Activated B cell treated with CpG ODN at 0.5 μM for 24 hours (primary cell): ENCODE measurements at regions of chr14 and their contacts with region 1.

Region 1: DNA sequence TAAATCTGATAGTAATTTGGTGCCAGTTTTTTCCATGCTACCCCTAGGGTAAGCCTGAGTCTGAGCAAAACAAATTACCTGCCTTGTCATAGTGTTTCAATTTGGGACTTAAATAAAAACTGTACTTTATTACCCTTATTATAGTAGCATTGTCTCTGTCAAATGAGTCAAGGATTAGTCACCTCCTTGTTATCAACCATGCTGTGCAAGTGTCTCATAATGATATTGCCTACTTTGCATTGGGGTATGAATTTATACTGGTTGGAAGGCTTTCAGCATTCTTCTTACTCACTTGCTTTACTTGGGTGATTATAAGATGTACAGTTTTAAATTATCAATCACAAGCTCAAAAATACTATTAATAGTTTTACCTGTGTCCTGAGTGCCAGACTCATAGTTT is 380.1 kb downstream of the LRFN5 start:
- DNase-seq: no peak
- ATAC-seq: peak; percentile 60
- H3K4me3 Mint-ChIP-seq: no peak overlapping the region
- H3K27ac Mint-ChIP-seq: peak overlapping the region; percentile 52
- H3K4me1 Mint-ChIP-seq: peaks cover 32% of the 10 kb centered on the region
- H3K27me3 Mint-ChIP-seq: no peaks in the 10 kb centered on the region
- CTCF ChIP-seq: no peak

Region 2: DNA sequence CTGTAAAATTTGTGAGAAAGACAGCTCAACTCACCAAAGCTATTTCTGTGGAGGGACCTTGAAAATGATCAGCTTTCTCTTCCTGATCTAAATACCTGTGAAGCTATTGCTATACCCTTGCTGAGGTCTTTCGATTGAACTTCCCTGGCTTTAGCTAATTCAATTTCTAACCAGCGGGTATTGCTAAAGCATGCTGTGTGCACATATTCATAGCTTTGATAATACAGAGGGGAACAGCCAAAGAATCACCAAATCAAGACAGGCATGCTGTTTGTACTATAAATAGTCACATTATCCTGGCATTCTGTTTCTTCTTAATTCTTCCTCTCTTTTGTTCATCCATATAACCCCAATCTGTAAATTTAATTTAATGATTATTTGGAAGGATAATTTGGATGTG is 147.1 kb before region 1 on chr14:
- CTCF ChIA-PET with region 1: no interaction called
- POLR2A ChIA-PET with region 1: no interaction called
- intact Hi-C with region 1: no loop called
- DNase-seq: no peak
- ATAC-seq: no peak
- H3K4me3 Mint-ChIP-seq: no peak overlapping the region
- H3K27ac Mint-ChIP-seq: no peak overlapping the region
- H3K4me1 Mint-ChIP-seq: no peaks in the 10 kb centered on the region
- H3K27me3 Mint-ChIP-seq: no peaks in the 10 kb centered on the region
- CTCF ChIP-seq: no peak

Region 3: DNA sequence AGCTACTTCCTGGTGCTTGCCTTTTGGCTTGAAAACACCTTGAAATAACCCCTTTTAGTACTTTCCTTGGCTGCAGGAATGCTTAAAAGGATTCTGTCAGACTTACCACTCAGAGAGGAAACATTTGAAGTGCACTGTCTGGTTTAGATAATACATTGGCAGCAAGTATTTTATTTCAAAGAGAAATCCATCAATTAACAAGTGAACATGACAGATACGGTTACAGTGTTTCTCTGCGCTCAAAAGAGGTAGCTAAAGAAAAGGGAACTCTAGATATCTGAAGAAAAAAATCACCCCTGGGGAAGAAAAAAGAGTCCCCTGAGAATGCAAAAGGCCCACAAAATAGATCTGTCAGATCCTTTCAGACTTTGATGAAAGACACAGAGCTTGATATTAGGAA is 41.9 kb after region 1 on chr14:
- CTCF ChIA-PET with region 1: no interaction called
- POLR2A ChIA-PET with region 1: no interaction called
- intact Hi-C with region 1: loop called (anchors 1 kb)
- DNase-seq: no peak
- ATAC-seq: peak; percentile 83
- H3K4me3 Mint-ChIP-seq: peak overlapping the region; percentile 38
- H3K27ac Mint-ChIP-seq: peak overlapping the region; percentile 85
- H3K4me1 Mint-ChIP-seq: peaks cover 29% of the 10 kb centered on the region
- H3K27me3 Mint-ChIP-seq: no peaks in the 10 kb centered on the region
- CTCF ChIP-seq: no peak

Region 4: DNA sequence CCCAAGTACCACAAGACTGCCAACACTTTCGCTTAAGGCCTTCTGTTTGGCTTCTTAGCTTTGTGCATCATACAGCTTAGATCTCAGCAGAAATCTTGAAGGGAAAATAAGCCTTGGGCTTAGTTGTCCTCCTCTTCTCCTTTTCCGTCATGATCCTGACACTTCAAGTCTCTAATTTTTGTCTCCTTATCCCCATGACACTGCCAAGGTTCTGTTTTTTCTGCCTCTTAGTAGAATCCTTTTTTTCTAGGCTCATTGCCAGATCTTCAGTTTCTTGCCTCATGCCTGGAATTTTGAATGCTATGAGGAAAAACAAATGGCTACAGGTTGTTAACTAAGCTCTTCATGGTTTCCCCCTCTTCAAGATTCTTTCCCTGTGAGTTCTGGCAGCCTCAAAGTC is 70.4 kb after region 1 on chr14:
- CTCF ChIA-PET with region 1: no interaction called
- POLR2A ChIA-PET with region 1: no interaction called
- intact Hi-C with region 1: no loop called
- DNase-seq: no peak
- ATAC-seq: no peak
- H3K4me3 Mint-ChIP-seq: no peak overlapping the region
- H3K27ac Mint-ChIP-seq: no peak overlapping the region
- H3K4me1 Mint-ChIP-seq: no peaks in the 10 kb centered on the region
- H3K27me3 Mint-ChIP-seq: no peaks in the 10 kb centered on the region
- CTCF ChIP-seq: no peak